Activated B cell treated with CpG ODN at 0.5 μM for 24 hours (primary cell): ENCODE measurements at regions of chr20 and their contacts with region 1.

Region 1: DNA sequence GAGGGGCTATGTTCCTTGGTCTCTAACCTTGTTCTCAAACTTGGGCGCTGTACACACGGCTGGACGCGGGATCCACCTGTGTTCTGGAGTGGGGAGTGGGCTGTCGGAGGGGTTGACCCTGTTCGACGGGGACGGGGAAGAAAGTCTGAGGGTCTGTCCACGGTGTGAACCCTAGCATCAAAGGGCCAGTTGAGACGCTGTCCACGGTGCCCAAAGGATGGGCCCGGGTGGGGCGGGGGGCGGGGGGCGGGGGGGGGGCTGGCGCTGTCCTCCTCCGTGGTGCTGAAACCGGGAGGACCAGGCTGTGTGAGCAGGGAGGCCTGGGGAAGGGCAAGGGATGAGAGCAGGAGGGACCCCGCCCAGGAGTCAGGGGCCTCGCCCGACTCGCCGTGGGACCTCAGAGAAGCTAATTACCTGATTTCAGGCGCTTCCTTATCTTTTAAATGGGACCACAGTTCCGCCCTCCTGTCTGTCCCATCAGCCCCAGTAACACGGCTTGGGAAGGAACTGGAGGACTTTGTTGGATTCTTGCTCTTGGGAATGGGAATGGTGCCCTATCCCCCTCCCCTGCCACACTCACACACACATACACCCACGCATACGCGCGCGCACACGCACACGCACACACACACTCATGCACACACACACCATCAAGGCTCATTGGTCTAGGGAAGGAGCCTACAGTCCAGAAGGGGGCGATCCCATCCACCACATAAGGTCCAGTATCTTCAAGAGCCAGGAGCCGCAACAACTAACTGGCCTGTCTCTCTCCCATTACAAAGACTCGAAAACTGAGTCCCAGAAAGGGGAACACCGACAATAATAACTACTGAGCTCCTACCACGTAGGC is 1.0 kb upstream of the VSTM2L start:
- DNase-seq: peak; percentile 19
- ATAC-seq: peak; percentile 45
- H3K4me3 Mint-ChIP-seq: peak overlapping the region; percentile 69
- H3K27ac Mint-ChIP-seq: no peak overlapping the region
- H3K4me1 Mint-ChIP-seq: peaks cover 12% of the 10 kb centered on the region
- H3K27me3 Mint-ChIP-seq: peaks cover 46% of the 10 kb centered on the region
- CTCF ChIP-seq: no peak

Region 2: GRCh38 chr20:37564388-37565133 is 337.3 kb before region 1 on chr20:
- CTCF ChIA-PET with region 1: no interaction called
- POLR2A ChIA-PET with region 1: no interaction called
- intact Hi-C with region 1: loop called (anchors 5 kb)
- DNase-seq: peak; percentile 58
- ATAC-seq: peak; percentile 77
- H3K4me3 Mint-ChIP-seq: no peak overlapping the region
- H3K27ac Mint-ChIP-seq: no peak overlapping the region
- H3K4me1 Mint-ChIP-seq: peaks cover 5% of the 10 kb centered on the region
- H3K27me3 Mint-ChIP-seq: peaks cover 32% of the 10 kb centered on the region
- CTCF ChIP-seq: peak; percentile 43

Region 3: DNA sequence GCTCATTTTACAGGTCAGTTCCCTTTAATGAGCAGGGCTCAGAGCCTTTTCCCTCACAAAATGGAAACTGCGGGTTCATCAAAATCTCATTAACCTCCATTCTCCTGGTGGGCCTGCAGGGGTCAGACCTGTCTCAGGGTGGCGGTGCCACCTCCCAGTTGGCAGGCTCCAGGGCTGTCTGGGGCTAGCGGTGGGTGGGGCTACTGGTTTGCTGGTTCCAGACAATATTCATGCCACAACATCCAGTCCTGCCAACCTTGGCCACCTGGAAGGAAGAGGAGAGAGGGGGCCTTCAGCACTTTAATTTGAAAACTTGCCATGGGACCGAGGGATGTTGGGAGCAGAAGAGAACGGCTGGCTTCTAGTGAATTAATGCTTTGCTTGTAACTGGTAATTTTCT is 249.9 kb before region 1 on chr20:
- CTCF ChIA-PET with region 1: no interaction called
- POLR2A ChIA-PET with region 1: no interaction called
- intact Hi-C with region 1: loop called (anchors 2 kb)
- DNase-seq: no peak
- ATAC-seq: peak; percentile 75
- H3K4me3 Mint-ChIP-seq: no peak overlapping the region
- H3K27ac Mint-ChIP-seq: no peak overlapping the region
- H3K4me1 Mint-ChIP-seq: no peaks in the 10 kb centered on the region
- H3K27me3 Mint-ChIP-seq: peaks cover 12% of the 10 kb centered on the region
- CTCF ChIP-seq: no peak

Region 4: DNA sequence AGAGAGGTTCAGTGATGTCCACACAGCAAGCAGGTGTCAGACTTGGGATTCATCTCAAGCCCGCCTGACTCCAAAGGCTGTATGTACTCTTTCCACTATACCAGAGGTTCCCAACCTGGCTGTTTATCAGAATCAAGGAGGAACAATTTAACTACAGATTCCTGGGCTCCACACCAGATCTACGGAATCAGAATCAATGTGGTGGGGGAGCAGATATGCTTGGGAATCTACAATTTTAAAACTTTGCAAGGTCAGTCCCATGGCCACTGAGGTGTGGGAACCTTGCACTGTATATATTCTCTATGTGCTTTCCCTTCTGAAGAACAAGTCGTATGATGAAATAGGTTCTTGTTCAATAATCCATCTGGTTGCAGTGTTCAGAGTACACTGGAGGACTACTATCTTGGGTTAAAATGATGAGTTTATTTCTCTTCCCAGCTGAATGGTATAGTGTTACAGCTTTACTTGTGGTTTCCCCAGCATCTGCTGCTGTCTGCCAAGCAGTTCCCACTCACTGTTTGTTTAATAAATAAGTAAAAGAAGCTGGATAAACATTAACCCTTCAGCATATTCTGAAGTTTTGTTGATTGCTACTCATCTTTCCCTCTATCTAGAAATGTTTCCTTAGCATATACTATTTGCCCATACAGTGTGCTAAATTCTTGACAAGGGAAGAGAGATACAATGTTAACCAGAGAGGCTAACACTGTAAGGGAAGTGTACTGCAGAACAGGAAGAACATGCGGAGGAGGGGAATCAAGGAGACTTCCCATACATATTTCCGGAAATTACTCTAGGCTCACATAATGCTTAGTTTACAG is 121.5 kb after region 1 on chr20:
- CTCF ChIA-PET with region 1: no interaction called
- POLR2A ChIA-PET with region 1: no interaction called
- intact Hi-C with region 1: no loop called
- DNase-seq: no peak
- ATAC-seq: no peak
- H3K4me3 Mint-ChIP-seq: no peak overlapping the region
- H3K27ac Mint-ChIP-seq: no peak overlapping the region
- H3K4me1 Mint-ChIP-seq: peaks cover 25% of the 10 kb centered on the region
- H3K27me3 Mint-ChIP-seq: no peaks in the 10 kb centered on the region
- CTCF ChIP-seq: no peak

Region 5: DNA sequence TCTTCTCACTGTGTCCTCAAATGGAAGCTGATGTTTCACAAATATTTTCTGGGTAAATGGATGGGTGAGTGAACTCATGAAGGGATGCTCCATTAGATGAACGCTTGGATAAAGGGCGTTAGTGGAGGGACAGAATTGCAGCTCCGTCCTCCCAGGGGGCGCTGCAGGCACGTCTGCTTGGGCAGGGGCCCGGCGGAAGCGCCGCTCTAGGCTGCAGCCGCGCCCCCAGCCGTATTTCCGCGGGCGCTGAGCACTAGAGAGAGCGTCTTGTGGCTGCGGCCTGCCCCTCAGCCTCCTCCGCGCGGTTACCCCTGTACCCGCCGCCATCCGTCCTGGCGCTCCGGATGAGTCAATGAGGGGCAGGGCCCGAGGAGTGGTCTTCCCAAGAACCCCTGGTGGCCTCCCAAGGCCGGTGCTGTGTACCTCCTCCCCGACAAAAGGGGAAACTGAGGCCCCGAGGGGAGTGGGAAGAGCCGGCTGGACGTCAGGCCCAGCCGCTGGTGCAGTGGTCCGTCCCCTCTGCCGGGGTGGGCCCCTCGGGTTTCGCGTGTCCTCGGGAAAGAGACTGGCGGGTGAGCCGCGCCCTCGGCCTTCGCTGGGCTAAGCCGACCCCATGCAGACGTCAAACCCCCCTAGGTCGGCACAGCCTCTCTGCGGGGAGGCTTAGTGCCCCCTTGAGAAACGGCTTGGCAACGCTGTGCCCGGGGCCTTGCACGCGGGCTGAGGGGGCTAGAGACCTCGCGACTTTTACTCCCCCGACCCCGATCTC is 544.7 kb after region 1 on chr20:
- CTCF ChIA-PET with region 1: no interaction called
- POLR2A ChIA-PET with region 1: no interaction called
- intact Hi-C with region 1: no loop called
- DNase-seq: peak; percentile 93
- ATAC-seq: peak; percentile 88
- H3K4me3 Mint-ChIP-seq: peak overlapping the region; percentile 87
- H3K27ac Mint-ChIP-seq: peak overlapping the region; percentile 74
- H3K4me1 Mint-ChIP-seq: peaks cover 29% of the 10 kb centered on the region
- H3K27me3 Mint-ChIP-seq: peaks cover 7% of the 10 kb centered on the region
- CTCF ChIP-seq: peak; percentile 66